Heart right ventricle (tissue), 16 donors: ENCODE measurements at regions of chr1 and their contacts with region 1.

Region 1: DNA sequence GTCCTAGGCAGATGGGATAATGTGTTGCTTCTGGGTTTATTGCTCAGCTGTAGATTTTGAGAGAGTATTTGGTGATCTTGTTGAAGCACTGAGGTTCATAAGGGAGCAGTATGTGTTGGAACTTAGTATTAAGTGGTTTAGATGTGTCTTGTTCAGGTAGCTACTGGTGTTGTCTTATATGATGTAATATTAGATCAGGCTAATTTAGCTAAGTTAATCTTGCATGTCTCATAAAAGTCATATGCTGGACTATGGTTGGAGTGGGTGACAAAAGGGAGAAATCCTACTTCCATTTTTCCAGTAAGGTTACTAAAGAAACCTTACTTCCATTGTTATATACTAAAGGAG is 196.4 kb downstream of the CLEC20A start:
- DNase-seq: no peak
- ATAC-seq: peak in 2 of 8 donors; percentile 10 to 14
- H3K4me3 ChIP-seq: no peak overlapping the region
- H3K27ac ChIP-seq: peak overlapping the region in 1 of 10 donors; percentile 8
- H3K4me1 ChIP-seq: peaks cover 0 to 37% (median 17%) of the 10 kb centered on the region in 9 donors
- H3K27me3 ChIP-seq: no peaks in the 10 kb centered on the region
- CTCF ChIP-seq: no peak

Region 2: GRCh38 chr1:178501705-178502329 is 201.5 kb after region 1 on chr1:
- intact Hi-C with region 1: loop called in 3 of 10 experiments (anchors 5 to 10 kb)
- DNase-seq: peak; percentile 66 to 76
- ATAC-seq: peak; percentile 64 to 89 (median 78)
- H3K4me3 ChIP-seq: no peak overlapping the region
- H3K27ac ChIP-seq: no peak overlapping the region
- H3K4me1 ChIP-seq: peaks cover 0 to 6% (median 0%) of the 10 kb centered on the region in 9 donors
- H3K27me3 ChIP-seq: no peaks in the 10 kb centered on the region
- CTCF ChIP-seq: peak; percentile 75 to 94 (median 92)

Region 3: GRCh38 chr1:178528072-178528952 is 228.0 kb after region 1 on chr1:
- intact Hi-C with region 1: no loop called
- DNase-seq: no peak
- ATAC-seq: peak in 1 of 8 donors; percentile 26
- H3K4me3 ChIP-seq: no peak overlapping the region
- H3K27ac ChIP-seq: no peak overlapping the region
- H3K4me1 ChIP-seq: peaks cover 0 to 10% (median 3%) of the 10 kb centered on the region in 9 donors
- H3K27me3 ChIP-seq: no peaks in the 10 kb centered on the region
- CTCF ChIP-seq: no peak

Region 4: DNA sequence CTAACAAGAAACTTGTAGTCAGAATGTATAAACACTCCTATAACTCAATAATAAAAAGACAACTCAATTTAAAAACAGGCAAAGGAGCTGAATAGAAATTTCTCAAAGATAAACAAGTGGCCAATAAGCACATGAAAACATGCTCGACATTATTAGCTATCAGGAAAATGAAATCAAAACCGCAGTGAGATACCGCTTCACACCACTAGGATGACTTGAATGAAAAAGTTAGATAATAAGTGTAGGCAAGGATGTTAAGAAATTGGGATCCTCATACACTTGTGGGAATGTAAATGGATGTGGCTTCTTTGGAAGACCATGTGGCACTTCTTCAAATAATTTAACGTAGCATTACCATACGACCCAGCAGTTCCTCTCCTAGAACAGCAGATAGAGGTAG is 433.6 kb after region 1 on chr1:
- intact Hi-C with region 1: no loop called
- DNase-seq: no peak
- ATAC-seq: no peak
- H3K4me3 ChIP-seq: no peak overlapping the region
- H3K27ac ChIP-seq: no peak overlapping the region
- H3K4me1 ChIP-seq: no peaks in the 10 kb centered on the region
- H3K27me3 ChIP-seq: no peaks in the 10 kb centered on the region
- CTCF ChIP-seq: peak in 3 of 9 donors; percentile 14 to 30 (median 20)